Endothelial cell of umbilical vein (primary cell): ENCODE measurements at regions of chr4 and their contacts with region 1.

Region 1: GRCh38 chr4:114028071-114028470 is 48.6 kb upstream of the ARSJ start:
- DNase-seq: peak; percentile 92
- H3K4me3 ChIP-seq: no peak overlapping the region
- H3K27ac ChIP-seq: no peak overlapping the region
- H3K4me1 ChIP-seq: peaks cover 8% of the 10 kb centered on the region
- H3K27me3 ChIP-seq: no peaks in the 10 kb centered on the region
- CTCF ChIP-seq: no peak
- POLR2A ChIP-seq: no peak

Region 2: DNA sequence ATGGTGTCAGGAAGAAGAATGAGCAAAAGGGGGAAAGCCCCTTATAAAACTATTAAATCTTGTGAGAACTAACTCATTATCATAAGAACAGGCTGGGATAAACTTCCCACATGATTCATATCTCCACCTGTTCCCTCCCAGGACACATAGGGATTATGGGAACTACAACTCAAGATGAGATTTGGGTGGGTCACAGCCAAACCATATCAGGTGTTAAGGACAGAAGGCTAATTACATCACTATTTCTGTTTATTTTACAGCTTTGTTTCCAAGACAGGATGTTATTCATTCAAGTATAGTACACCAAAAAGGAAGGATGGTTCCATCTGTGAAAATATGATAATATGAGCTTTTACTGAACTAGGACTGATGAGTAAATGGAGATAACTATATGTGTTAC is 15.0 kb after region 1 on chr4:
- CTCF ChIA-PET with region 1: no interaction called
- POLR2A ChIA-PET with region 1: no interaction called
- dilution Hi-C with region 1: no loop called
- intact Hi-C with region 1: loop called (anchors 2 kb)
- DNase-seq: peak; percentile 90
- H3K4me3 ChIP-seq: no peak overlapping the region
- H3K27ac ChIP-seq: no peak overlapping the region
- H3K4me1 ChIP-seq: peaks cover 10% of the 10 kb centered on the region
- H3K27me3 ChIP-seq: no peaks in the 10 kb centered on the region
- CTCF ChIP-seq: no peak
- POLR2A ChIP-seq: no peak